H1 (cell line): ENCODE measurements at regions of chr17 and their contacts with region 1.

Region 1: GRCh38 chr17:38674749-38675615 is at the start of gene EPOP:
- DNase-seq: peak in 1 of 2 experiments; percentile 91
- H3K4me3 ChIP-seq: peak within 1 kb of the TSS; percentile 45 to 71 (median 48)
- H3K27ac ChIP-seq: no peak within 1 kb of the TSS
- H3K4me1 ChIP-seq: peaks cover 4 to 33% (median 17%) of the 10 kb centered on the region in 4 experiments
- H3K27me3 ChIP-seq: peaks cover 33 to 69% (median 65%) of the 10 kb centered on the region in 4 experiments
- CTCF ChIP-seq: no peak
- EP300 ChIP-seq: no peak
- POLR2A ChIP-seq: no peak
- RAD21 ChIP-seq: no peak
- total RNA-seq, gene EPOP: 3.3 and 4.0 TPM in 2 replicates

Region 2: GRCh38 chr17:38397227-38397626 is 277.8 kb before region 1 on chr17:
- CTCF ChIA-PET with region 1: no interaction called
- POLR2A ChIA-PET with region 1: no interaction called
- DNase-seq: no peak
- H3K4me3 ChIP-seq: no peak overlapping the region
- H3K27ac ChIP-seq: no peak overlapping the region
- H3K4me1 ChIP-seq: no peaks in the 10 kb centered on the region
- H3K27me3 ChIP-seq: no peaks in the 10 kb centered on the region
- CTCF ChIP-seq: no peak
- EP300 ChIP-seq: no peak
- POLR2A ChIP-seq: no peak
- RAD21 ChIP-seq: no peak

Region 3: GRCh38 chr17:38509008-38509771 is 165.8 kb before region 1 on chr17:
- CTCF ChIA-PET with region 1: interaction called, 181 read pairs
- POLR2A ChIA-PET with region 1: interaction called, 4 read pairs
- DNase-seq: peak; percentile 93 to 96
- H3K4me3 ChIP-seq: peak overlapping the region in 3 of 4 experiments; percentile 30 to 56 (median 47); a peak in 7 of 8 replicates
- H3K27ac ChIP-seq: peak overlapping the region; percentile 37; the same call in 1 of the 2 replicates
- H3K4me1 ChIP-seq: peaks cover 4 to 28% (median 21%) of the 10 kb centered on the region in 4 experiments
- H3K27me3 ChIP-seq: peaks cover 0 to 24% (median 11%) of the 10 kb centered on the region in 4 experiments; a peak in 4 of 7 replicates
- CTCF ChIP-seq: peak; percentile 90 to 96 (median 95)
- EP300 ChIP-seq: 0 out of 3 replicates have a peak, but pooled peaks of 1 of the 2 experiments have one; percentile 19
- POLR2A ChIP-seq: peak; percentile 69 to 76; a peak in 2 of 3 replicates
- RAD21 ChIP-seq: peak; percentile 75 to 80

Region 4: GRCh38 chr17:38563362-38564253 is 111.4 kb before region 1 on chr17:
- CTCF ChIA-PET with region 1: interaction called, 366 read pairs
- POLR2A ChIA-PET with region 1: interaction called, 18 read pairs
- DNase-seq: peak; percentile 75 to 83
- H3K4me3 ChIP-seq: peak overlapping the region; percentile 28 to 60 (median 48)
- H3K27ac ChIP-seq: no peak overlapping the region
- H3K4me1 ChIP-seq: peaks cover 8 to 50% (median 38%) of the 10 kb centered on the region in 4 experiments
- H3K27me3 ChIP-seq: peaks cover 65 to 95% (median 91%) of the 10 kb centered on the region in 4 experiments
- CTCF ChIP-seq: no peak
- EP300 ChIP-seq: no peak
- POLR2A ChIP-seq: no peak
- RAD21 ChIP-seq: peak in 1 of 2 experiments; percentile 0; a peak in 1 of 4 replicates

Region 5: DNA sequence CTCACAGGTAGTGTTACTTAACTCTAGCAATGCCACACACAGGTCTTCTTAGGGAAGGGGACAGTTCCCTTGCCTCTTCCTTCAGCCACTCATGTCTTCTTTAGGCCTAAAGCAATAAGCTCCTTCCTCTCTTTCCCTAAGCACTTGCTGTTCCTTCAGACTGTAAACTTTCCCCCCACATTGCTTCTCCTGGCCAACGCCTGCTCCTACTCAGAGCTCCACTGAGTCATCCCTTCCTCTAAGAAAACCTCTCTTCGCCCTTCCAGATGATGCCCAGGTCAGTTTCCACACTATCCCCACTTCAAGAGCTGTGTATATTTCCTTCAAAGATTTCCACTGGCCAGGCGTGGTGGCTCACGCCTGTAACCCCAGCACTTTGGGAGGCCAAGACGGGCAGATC is 12.3 kb after region 1 on chr17:
- CTCF ChIA-PET with region 1: interaction called, 141 read pairs
- POLR2A ChIA-PET with region 1: interaction called, 5 read pairs
- DNase-seq: no peak
- H3K4me3 ChIP-seq: no peak overlapping the region
- H3K27ac ChIP-seq: no peak overlapping the region
- H3K4me1 ChIP-seq: no peaks in the 10 kb centered on the region
- H3K27me3 ChIP-seq: peaks cover 0 to 10% (median 3%) of the 10 kb centered on the region in 4 experiments; a peak in 2 of 7 replicates
- CTCF ChIP-seq: no peak
- EP300 ChIP-seq: no peak
- POLR2A ChIP-seq: no peak
- RAD21 ChIP-seq: no peak

Region 6: DNA sequence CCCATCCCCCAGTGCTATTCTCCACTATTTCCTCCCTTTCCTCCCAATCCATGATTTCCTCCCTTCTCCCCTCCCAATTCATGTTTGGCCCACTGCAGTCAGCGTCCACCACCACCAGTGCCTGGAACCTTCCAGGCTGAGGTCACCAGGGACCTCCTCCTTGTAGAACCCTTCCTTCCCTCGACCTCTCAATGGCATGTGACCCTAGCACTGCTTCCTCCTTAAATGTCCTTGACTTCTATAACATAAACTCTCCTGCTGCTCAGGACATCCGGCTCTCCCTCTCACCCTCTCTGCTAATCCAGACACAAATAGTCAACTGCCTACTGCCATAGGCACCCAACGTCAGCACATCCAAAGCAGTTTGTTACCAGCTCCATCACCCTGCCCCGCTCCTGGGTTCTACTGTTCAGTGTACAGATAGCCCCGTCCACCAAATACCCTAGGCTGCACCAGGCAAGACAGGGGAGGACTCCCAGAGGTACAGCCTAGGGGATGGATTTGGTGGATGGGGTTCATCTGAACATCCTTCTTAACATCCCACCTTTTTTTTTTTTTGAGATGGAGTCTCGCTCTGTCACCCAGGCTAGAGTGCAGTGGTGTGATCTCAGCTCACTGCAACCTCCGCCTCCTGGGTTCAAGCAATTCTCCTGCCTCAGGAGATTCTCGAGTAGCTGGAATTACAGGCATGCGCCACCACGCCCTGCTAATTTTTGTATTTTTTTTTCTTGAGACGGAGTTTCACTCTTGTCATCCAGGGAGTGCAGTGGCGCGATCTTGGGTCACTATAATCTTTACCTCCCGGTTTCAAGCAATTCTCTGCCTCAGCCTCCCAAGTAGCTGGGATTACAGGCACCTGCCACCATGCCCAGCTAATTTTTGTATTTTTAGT is 24.5 kb after region 1 on chr17:
- CTCF ChIA-PET with region 1: interaction called, 141 read pairs
- POLR2A ChIA-PET with region 1: interaction called, 4 read pairs
- DNase-seq: no peak
- H3K4me3 ChIP-seq: no peak overlapping the region
- H3K27ac ChIP-seq: no peak overlapping the region
- H3K4me1 ChIP-seq: peaks cover 8 to 26% (median 20%) of the 10 kb centered on the region in 4 experiments
- H3K27me3 ChIP-seq: peaks cover 27 to 71% (median 65%) of the 10 kb centered on the region in 4 experiments
- CTCF ChIP-seq: no peak
- EP300 ChIP-seq: no peak
- POLR2A ChIP-seq: no peak
- RAD21 ChIP-seq: no peak

Region 7: DNA sequence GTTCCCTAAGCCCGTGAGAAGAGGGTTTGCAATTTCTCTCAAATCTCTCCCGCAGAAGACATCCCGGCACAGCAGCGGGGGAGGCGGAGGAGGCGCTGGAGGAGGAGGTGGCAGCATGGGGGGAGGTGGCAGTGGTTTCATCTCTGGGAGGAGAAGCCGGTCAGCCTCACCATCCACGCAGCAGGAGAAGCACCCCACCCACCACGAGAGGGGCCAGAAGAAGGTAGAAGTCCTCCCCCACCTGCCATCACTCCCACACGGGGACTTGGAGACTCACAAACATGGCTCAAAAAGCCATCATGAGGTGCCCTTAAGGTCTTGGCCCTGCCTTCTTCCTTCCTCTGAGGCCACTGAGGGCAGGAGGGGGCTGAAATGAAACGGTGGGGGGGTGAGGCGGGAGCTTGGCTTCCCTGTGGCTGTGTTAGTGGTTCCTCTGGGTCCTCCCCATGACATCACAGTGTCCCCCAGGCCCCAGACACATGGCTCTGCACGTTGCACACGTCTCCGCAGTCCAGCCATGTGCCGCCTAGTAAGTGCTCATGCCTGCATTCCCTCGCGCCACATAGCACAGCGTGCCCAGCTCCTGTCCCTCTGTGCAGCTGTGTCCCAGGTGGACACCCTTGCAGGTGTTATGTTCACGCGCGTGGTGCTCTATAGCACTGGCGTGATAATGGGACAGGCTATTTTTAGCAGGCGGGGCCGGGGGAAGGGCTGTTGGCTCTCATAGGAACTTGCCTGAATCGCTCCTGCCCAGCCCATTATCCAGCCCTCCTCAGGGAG is 37.0 kb after region 1 on chr17:
- CTCF ChIA-PET with region 1: interaction called, 17 read pairs
- POLR2A ChIA-PET with region 1: interaction called, 5 read pairs
- DNase-seq: no peak
- H3K4me3 ChIP-seq: no peak overlapping the region
- H3K27ac ChIP-seq: no peak overlapping the region
- H3K4me1 ChIP-seq: peaks cover 9 to 36% (median 25%) of the 10 kb centered on the region in 4 experiments
- H3K27me3 ChIP-seq: peaks cover 1 to 26% (median 15%) of the 10 kb centered on the region in 4 experiments
- CTCF ChIP-seq: no peak
- EP300 ChIP-seq: no peak
- POLR2A ChIP-seq: no peak
- RAD21 ChIP-seq: no peak

Region 8: GRCh38 chr17:38729886-38730525 is 55.0 kb after region 1 on chr17 and contains the start of gene CISD3:
- CTCF ChIA-PET with region 1: interaction called, 44 read pairs
- POLR2A ChIA-PET with region 1: interaction called, 4 read pairs
- DNase-seq: peak in 1 of 2 experiments; percentile 84
- H3K4me3 ChIP-seq: peak within 1 kb of the TSS; percentile 48 to 72 (median 63)
- H3K27ac ChIP-seq: no peak within 1 kb of the TSS
- H3K4me1 ChIP-seq: peaks cover 0 to 10% (median 5%) of the 10 kb centered on the region in 4 experiments; a peak in 5 of 7 replicates
- H3K27me3 ChIP-seq: peaks cover 0 to 17% (median 7%) of the 10 kb centered on the region in 4 experiments; a peak in 3 of 7 replicates
- CTCF ChIP-seq: peak; percentile 59 to 73 (median 62)
- EP300 ChIP-seq: no peak
- POLR2A ChIP-seq: 0 out of 3 replicates have a peak, but pooled peaks of 1 of the 2 experiments have one; percentile 17
- RAD21 ChIP-seq: peak in 1 of 2 experiments; percentile 47; a peak in 2 of 4 replicates
- total RNA-seq, gene CISD3: 11.1 and 11.6 TPM in 2 replicates